ENCODE measurements at regions of chr6 and their contacts with region 1.

Region 1: GRCh38 chr6:29752451-29753308 is 29.4 kb downstream of the HLA-F start:
- DNase-seq: peak; percentile 69 to 93 (median 85)
- ATAC-seq: peak; percentile 67
- H3K4me3 ChIP-seq: peak overlapping the region; percentile 74 to 96
- H3K4me3 Mint-ChIP-seq: peak overlapping the region; percentile 96
- H3K27ac ChIP-seq: peak overlapping the region; percentile 67 to 75
- H3K27ac Mint-ChIP-seq: peak overlapping the region; percentile 92
- H3K4me1 ChIP-seq: peaks cover 21% of the 10 kb centered on the region
- H3K4me1 Mint-ChIP-seq: peaks cover 40% of the 10 kb centered on the region
- H3K27me3 ChIP-seq: no peaks in the 10 kb centered on the region
- H3K27me3 Mint-ChIP-seq: no peaks in the 10 kb centered on the region
- CTCF ChIP-seq: peak; percentile 98

Region 2: DNA sequence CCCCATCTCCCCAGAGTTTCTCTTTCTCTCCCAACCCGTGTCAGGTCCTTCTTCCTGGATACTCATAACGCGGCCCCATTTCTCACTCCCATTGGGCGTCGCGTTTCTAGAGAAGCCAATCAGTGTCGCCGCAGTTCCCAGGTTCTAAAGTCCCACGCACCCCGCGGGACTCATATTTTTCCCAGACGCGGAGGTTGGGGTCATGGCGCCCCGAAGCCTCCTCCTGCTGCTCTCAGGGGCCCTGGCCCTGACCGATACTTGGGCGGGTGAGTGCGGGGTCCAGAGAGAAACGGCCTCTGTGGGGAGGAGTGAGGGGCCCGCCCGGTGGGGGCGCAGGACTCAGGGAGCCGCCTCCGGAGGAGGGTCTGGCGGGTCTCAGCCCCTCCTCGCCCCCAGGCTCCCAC is 29.4 kb before region 1 on chr6 and contains the start of gene HLA-F:
- CTCF ChIA-PET with region 1: interaction called, 184 read pairs
- POLR2A ChIA-PET with region 1: interaction called, 12 read pairs
- intact Hi-C with region 1: no loop called
- DNase-seq: peak; percentile 69 to 98 (median 85)
- ATAC-seq: peak; percentile 77
- H3K4me3 ChIP-seq: peak within 1 kb of the TSS; percentile 98
- H3K4me3 Mint-ChIP-seq: peak within 1 kb of the TSS; percentile 93
- H3K27ac ChIP-seq: peak within 1 kb of the TSS; percentile 88 to 100
- H3K27ac Mint-ChIP-seq: peak within 1 kb of the TSS; percentile 97
- H3K4me1 ChIP-seq: peaks cover 48% of the 10 kb centered on the region
- H3K4me1 Mint-ChIP-seq: peaks cover 56% of the 10 kb centered on the region
- H3K27me3 ChIP-seq: no peaks in the 10 kb centered on the region
- H3K27me3 Mint-ChIP-seq: no peaks in the 10 kb centered on the region
- CTCF ChIP-seq: no peak
- total RNA-seq, gene HLA-F: 378 to 382 TPM

Region 3: GRCh38 chr6:29737707-29738630 is 14.7 kb before region 1 on chr6:
- CTCF ChIA-PET with region 1: interaction called, 184 read pairs
- POLR2A ChIA-PET with region 1: interaction called, 10 read pairs
- intact Hi-C with region 1: loop called (anchors 1 kb)
- DNase-seq: peak; percentile 45 to 87 (median 75)
- ATAC-seq: peak; percentile 89
- H3K4me3 ChIP-seq: no peak overlapping the region
- H3K4me3 Mint-ChIP-seq: no peak overlapping the region
- H3K27ac ChIP-seq: no peak overlapping the region
- H3K27ac Mint-ChIP-seq: no peak overlapping the region
- H3K4me1 ChIP-seq: no peaks in the 10 kb centered on the region
- H3K4me1 Mint-ChIP-seq: peaks cover 16% of the 10 kb centered on the region
- H3K27me3 ChIP-seq: no peaks in the 10 kb centered on the region
- H3K27me3 Mint-ChIP-seq: no peaks in the 10 kb centered on the region
- CTCF ChIP-seq: peak; percentile 67

Region 4: DNA sequence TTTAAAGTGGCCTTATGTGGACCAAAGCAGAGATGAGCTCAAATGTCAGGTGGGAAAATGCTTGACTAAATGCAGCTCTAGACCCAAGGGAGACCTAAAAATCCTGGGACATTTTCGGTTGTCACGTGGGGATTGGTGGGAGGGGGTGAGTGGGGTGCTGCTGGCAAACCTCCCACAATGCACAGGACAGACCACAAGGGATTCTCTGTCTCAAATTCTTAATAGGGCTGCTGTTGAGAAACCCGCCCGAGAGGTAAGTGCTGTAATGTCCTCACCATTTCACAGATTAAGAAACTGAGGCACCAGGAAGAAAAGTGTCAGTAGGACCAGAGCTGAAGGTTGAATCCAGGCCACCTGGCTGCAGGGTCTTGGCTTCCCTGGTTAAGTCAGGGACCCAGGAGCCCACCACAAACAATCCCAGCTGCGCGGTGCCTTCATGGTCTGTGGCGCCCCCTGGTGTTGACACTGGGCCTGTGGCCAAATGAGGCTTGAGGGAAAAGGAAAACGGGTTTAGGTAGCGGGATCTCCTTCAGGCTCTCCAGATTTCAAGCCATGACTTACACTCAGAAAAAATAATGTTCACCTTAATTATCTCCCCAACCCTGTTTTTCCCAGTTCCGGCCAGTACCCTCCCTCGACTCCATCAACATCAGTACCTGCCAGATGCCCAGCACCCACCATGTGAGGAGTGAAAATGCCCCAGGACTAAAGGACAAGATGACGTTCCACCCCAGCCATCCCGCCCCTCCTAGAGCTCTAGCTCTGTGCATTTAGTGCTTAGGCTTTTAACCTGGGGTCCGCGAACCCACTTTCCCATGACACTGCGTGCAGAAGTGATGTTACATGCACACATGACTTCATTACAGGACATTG is 82.1 kb after region 1 on chr6:
- CTCF ChIA-PET with region 1: interaction called, 12 read pairs
- POLR2A ChIA-PET with region 1: no interaction called
- intact Hi-C with region 1: loop called (anchors 5 kb)
- DNase-seq: peak; percentile 26 to 77 (median 61)
- ATAC-seq: peak; percentile 57
- H3K4me3 ChIP-seq: no peak overlapping the region
- H3K4me3 Mint-ChIP-seq: no peak overlapping the region
- H3K27ac ChIP-seq: no peak overlapping the region
- H3K27ac Mint-ChIP-seq: no peak overlapping the region
- H3K4me1 ChIP-seq: no peaks in the 10 kb centered on the region
- H3K4me1 Mint-ChIP-seq: no peaks in the 10 kb centered on the region
- H3K27me3 ChIP-seq: peaks cover 0 to 8% of the 10 kb centered on the region in 2 experiments
- H3K27me3 Mint-ChIP-seq: peaks cover 68% of the 10 kb centered on the region
- CTCF ChIP-seq: peak; percentile 79